Heart left ventricle (tissue), 16 donors: ENCODE measurements at regions of chr12 and their contacts with region 1.

Region 1: GRCh38 chr12:100348657-100349454 is 8.0 kb upstream of the SLC17A8 start:
- DNase-seq: no peak
- ATAC-seq: no peak
- H3K4me3 ChIP-seq: no peak overlapping the region
- H3K27ac ChIP-seq: no peak overlapping the region
- H3K4me1 ChIP-seq: no peaks in the 10 kb centered on the region
- H3K27me3 ChIP-seq: no peaks in the 10 kb centered on the region
- CTCF ChIP-seq: peak in 11 of 12 donors; percentile 27 to 65 (median 47)
- POLR2A ChIP-seq: no peak

Region 2: DNA sequence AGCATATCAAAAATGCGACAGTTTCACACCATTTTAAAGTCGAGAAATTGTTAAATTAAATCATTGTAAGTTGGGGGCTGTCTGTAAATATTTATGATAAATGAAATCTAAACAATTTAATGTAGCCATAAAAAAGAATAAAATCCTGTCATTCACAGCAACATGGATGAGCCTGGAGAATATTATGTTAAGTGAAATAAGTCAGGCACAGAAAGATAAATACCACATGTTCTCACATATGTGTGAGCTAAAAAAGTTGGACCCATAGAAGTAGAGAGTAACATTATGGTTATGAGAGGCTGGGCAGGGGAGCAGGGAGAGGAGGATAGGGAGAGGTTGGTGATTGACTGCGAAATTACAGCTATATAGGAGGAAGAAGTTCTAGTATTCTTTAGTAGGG is 565.4 kb before region 1 on chr12:
- intact Hi-C with region 1: no loop called
- DNase-seq: no peak
- ATAC-seq: no peak
- H3K4me3 ChIP-seq: no peak overlapping the region
- H3K27ac ChIP-seq: no peak overlapping the region
- H3K4me1 ChIP-seq: no peaks in the 10 kb centered on the region
- H3K27me3 ChIP-seq: no peaks in the 10 kb centered on the region
- CTCF ChIP-seq: no peak
- POLR2A ChIP-seq: no peak

Region 3: GRCh38 chr12:100404769-100405407 is 56.0 kb after region 1 on chr12:
- intact Hi-C with region 1: loop called in 1 of 10 experiments (anchors 5 kb)
- DNase-seq: no peak
- ATAC-seq: no peak
- H3K4me3 ChIP-seq: no peak overlapping the region
- H3K27ac ChIP-seq: no peak overlapping the region
- H3K4me1 ChIP-seq: no peaks in the 10 kb centered on the region
- H3K27me3 ChIP-seq: no peaks in the 10 kb centered on the region
- CTCF ChIP-seq: peak in 10 of 12 donors; percentile 24 to 53 (median 36)
- POLR2A ChIP-seq: no peak

Region 4: GRCh38 chr12:100566887-100567637 is 218.2 kb after region 1 on chr12:
- intact Hi-C with region 1: no loop called
- DNase-seq: peak in 4 of 5 donors; percentile 24 to 53 (median 30)
- ATAC-seq: peak; percentile 41 to 84 (median 69)
- H3K4me3 ChIP-seq: no peak overlapping the region
- H3K27ac ChIP-seq: peak overlapping the region in 1 of 12 donors; percentile 57
- H3K4me1 ChIP-seq: peaks cover 0 to 18% (median 8%) of the 10 kb centered on the region in 12 donors
- H3K27me3 ChIP-seq: no peaks in the 10 kb centered on the region
- CTCF ChIP-seq: no peak
- POLR2A ChIP-seq: no peak

Region 5: GRCh38 chr12:100733817-100734593 is 385.1 kb after region 1 on chr12:
- intact Hi-C with region 1: loop called in 5 of 10 experiments (anchors 2 to 10 kb)
- DNase-seq: no peak
- ATAC-seq: no peak
- H3K4me3 ChIP-seq: no peak overlapping the region
- H3K27ac ChIP-seq: no peak overlapping the region
- H3K4me1 ChIP-seq: no peaks in the 10 kb centered on the region
- H3K27me3 ChIP-seq: peaks cover 0 to 27% (median 0%) of the 10 kb centered on the region in 9 donors
- CTCF ChIP-seq: peak in 10 of 12 donors; percentile 21 to 65 (median 48)
- POLR2A ChIP-seq: no peak